ENCODE measurements at regions of chr6 and their contacts with region 1.

Region 1: GRCh38 chr6:170147832-170148708 is 142.8 kb downstream of the DLL1 start:
- DNase-seq: peak; percentile 85
- ATAC-seq: peak; percentile 88
- H3K4me3 Mint-ChIP-seq: peak overlapping the region; percentile 79
- H3K27ac Mint-ChIP-seq: peak overlapping the region; percentile 97
- H3K4me1 Mint-ChIP-seq: peaks cover 61% of the 10 kb centered on the region
- H3K27me3 Mint-ChIP-seq: peaks cover 19% of the 10 kb centered on the region

Region 2: GRCh38 chr6:170087941-170088581 is 60.0 kb before region 1 on chr6:
- POLR2A ChIA-PET with region 1: interaction called, 103 read pairs
- DNase-seq: peak; percentile 82
- ATAC-seq: peak; percentile 78
- H3K4me3 Mint-ChIP-seq: peak overlapping the region; percentile 94
- H3K27ac Mint-ChIP-seq: peak overlapping the region; percentile 98
- H3K4me1 Mint-ChIP-seq: peaks cover 33% of the 10 kb centered on the region
- H3K27me3 Mint-ChIP-seq: no peaks in the 10 kb centered on the region

Region 3: GRCh38 chr6:170122663-170123062 is 25.4 kb before region 1 on chr6:
- POLR2A ChIA-PET with region 1: no interaction called
- DNase-seq: no peak
- ATAC-seq: no peak
- H3K4me3 Mint-ChIP-seq: no peak overlapping the region
- H3K27ac Mint-ChIP-seq: no peak overlapping the region
- H3K4me1 Mint-ChIP-seq: peaks cover 4% of the 10 kb centered on the region
- H3K27me3 Mint-ChIP-seq: peaks cover 11% of the 10 kb centered on the region

Region 4: GRCh38 chr6:170186006-170186958 is 38.2 kb after region 1 on chr6:
- POLR2A ChIA-PET with region 1: no interaction called
- DNase-seq: no peak
- ATAC-seq: no peak
- H3K4me3 Mint-ChIP-seq: no peak overlapping the region
- H3K27ac Mint-ChIP-seq: no peak overlapping the region
- H3K4me1 Mint-ChIP-seq: peaks cover 3% of the 10 kb centered on the region
- H3K27me3 Mint-ChIP-seq: peaks cover 2% of the 10 kb centered on the region

Region 5: GRCh38 chr6:170271771-170272314 is 123.8 kb after region 1 on chr6:
- POLR2A ChIA-PET with region 1: interaction called, 16 read pairs
- DNase-seq: peak; percentile 82
- ATAC-seq: peak; percentile 94
- H3K4me3 Mint-ChIP-seq: peak overlapping the region; percentile 73
- H3K27ac Mint-ChIP-seq: peak overlapping the region; percentile 90
- H3K4me1 Mint-ChIP-seq: peaks cover 15% of the 10 kb centered on the region
- H3K27me3 Mint-ChIP-seq: peaks cover 19% of the 10 kb centered on the region

Region 6: GRCh38 chr6:170291271-170292110 is 143.4 kb after region 1 on chr6:
- POLR2A ChIA-PET with region 1: interaction called, 17 read pairs
- DNase-seq: peak; percentile 69
- ATAC-seq: peak; percentile 46
- H3K4me3 Mint-ChIP-seq: peak overlapping the region; percentile 90
- H3K27ac Mint-ChIP-seq: peak overlapping the region; percentile 84
- H3K4me1 Mint-ChIP-seq: peaks cover 33% of the 10 kb centered on the region
- H3K27me3 Mint-ChIP-seq: peaks cover 41% of the 10 kb centered on the region